ENCODE measurements at regions of chr1 and their contacts with region 1.

Region 1: DNA sequence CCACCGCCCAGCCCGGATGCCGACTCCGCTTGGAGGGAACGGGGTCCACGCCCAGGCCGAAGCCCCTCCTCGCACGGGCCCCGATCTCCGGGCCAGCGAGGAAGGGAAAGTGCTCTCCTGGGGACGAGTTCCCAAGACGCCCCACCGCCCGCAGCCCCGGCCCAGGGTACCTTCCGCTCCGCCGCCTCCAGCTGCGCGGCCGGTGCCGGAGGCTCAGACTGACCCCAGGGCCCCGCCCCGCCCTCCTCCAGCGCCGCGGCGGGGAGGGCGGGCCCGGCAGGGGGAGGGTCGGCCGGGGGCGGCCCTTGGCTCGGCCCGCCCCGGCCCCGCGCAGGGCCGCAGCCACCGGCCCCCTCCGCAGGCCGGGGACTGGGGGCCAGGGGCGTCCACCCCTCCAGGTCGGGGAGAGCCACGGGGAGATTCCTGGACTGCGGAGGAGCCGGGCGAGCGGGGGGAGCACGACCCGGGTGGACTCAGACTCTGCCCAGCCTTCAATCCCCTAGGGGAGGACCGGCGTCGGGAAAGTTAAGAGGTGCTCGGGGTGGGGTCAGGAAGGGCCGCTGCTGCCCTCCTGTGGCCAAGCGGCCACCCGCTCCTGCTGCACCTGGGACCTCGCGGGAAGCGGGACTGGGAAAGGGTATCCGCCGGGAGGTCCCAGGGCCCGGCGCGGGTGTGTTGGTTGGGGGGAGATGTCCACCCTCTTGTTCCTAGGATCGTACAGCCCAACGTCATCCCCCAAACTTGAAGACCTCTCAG is at the start of gene RHOC:
- DNase-seq: peak; percentile 57
- H3K4me3 Mint-ChIP-seq: peak within 1 kb of the TSS; percentile 81
- H3K27ac Mint-ChIP-seq: peak within 1 kb of the TSS; percentile 51
- H3K4me1 Mint-ChIP-seq: peaks cover 41% of the 10 kb centered on the region
- H3K27me3 Mint-ChIP-seq: peaks cover 18% of the 10 kb centered on the region
- total RNA-seq, gene RHOC: 68.7 and 74.7 TPM in 2 replicates

Region 2: GRCh38 chr1:112466078-112466660 is 240.9 kb before region 1 on chr1:
- intact Hi-C with region 1: loop called (anchors 2 kb)
- DNase-seq: peak; percentile 79
- H3K4me3 Mint-ChIP-seq: peak overlapping the region; percentile 77
- H3K27ac Mint-ChIP-seq: no peak overlapping the region
- H3K4me1 Mint-ChIP-seq: peaks cover 13% of the 10 kb centered on the region
- H3K27me3 Mint-ChIP-seq: peaks cover 26% of the 10 kb centered on the region

Region 3: DNA sequence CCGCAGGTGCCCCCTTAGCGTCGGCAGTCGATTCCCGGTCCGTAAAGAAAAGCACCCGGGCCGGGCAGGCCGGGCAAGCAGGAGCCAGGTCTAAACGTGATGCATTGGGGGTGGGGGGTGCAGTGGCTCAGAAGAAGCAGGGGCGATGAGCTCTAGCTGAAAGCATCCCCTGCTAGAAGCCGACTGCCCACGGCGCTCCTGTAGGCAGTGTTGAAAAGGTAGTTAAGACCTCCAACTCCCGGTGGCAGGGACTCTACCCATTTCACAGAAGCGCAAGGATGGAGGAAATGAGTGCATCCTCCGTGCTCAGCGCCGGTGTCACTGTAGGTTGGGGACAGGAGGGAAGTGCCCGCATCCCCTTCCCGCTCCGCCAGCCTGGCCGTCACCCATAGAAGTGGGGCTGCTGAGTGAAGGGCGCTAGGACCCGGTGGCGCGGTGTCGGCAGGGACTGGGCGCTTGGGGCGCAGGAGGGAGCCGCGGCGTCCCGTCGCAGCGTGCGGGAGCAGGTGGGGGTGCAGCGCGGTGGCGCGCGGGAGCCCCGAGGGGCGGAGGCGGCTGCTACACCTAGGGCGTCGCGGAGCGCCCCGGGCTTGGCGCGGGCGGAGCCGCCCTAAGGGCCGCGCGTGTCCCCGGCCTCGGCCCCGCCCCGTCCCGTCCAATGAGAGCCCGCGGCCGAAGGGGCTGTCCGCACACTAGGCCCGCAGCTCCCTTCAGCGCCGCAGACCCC is 198.6 kb before region 1 on chr1 and contains the start of gene WNT2B:
- intact Hi-C with region 1: loop called (anchors 2 kb)
- DNase-seq: peak; percentile 33
- H3K4me3 Mint-ChIP-seq: peak within 1 kb of the TSS; percentile 69
- H3K27ac Mint-ChIP-seq: no peak within 1 kb of the TSS
- H3K4me1 Mint-ChIP-seq: peaks cover 2% of the 10 kb centered on the region
- H3K27me3 Mint-ChIP-seq: peaks cover 55% of the 10 kb centered on the region
- total RNA-seq, gene WNT2B: 0.16 TPM in 1 of 2 replicates, not detected in the other

Region 4: GRCh38 chr1:112651205-112651604 is 55.9 kb before region 1 on chr1:
- intact Hi-C with region 1: loop called (anchors 1 kb)
- DNase-seq: no peak
- H3K4me3 Mint-ChIP-seq: no peak overlapping the region
- H3K27ac Mint-ChIP-seq: peak overlapping the region; percentile 35
- H3K4me1 Mint-ChIP-seq: peaks cover 19% of the 10 kb centered on the region
- H3K27me3 Mint-ChIP-seq: no peaks in the 10 kb centered on the region

Region 5: GRCh38 chr1:112735752-112736151 is 28.7 kb after region 1 on chr1:
- intact Hi-C with region 1: no loop called
- DNase-seq: no peak
- H3K4me3 Mint-ChIP-seq: no peak overlapping the region
- H3K27ac Mint-ChIP-seq: no peak overlapping the region
- H3K4me1 Mint-ChIP-seq: peaks cover 4% of the 10 kb centered on the region
- H3K27me3 Mint-ChIP-seq: peaks cover 24% of the 10 kb centered on the region

Region 6: DNA sequence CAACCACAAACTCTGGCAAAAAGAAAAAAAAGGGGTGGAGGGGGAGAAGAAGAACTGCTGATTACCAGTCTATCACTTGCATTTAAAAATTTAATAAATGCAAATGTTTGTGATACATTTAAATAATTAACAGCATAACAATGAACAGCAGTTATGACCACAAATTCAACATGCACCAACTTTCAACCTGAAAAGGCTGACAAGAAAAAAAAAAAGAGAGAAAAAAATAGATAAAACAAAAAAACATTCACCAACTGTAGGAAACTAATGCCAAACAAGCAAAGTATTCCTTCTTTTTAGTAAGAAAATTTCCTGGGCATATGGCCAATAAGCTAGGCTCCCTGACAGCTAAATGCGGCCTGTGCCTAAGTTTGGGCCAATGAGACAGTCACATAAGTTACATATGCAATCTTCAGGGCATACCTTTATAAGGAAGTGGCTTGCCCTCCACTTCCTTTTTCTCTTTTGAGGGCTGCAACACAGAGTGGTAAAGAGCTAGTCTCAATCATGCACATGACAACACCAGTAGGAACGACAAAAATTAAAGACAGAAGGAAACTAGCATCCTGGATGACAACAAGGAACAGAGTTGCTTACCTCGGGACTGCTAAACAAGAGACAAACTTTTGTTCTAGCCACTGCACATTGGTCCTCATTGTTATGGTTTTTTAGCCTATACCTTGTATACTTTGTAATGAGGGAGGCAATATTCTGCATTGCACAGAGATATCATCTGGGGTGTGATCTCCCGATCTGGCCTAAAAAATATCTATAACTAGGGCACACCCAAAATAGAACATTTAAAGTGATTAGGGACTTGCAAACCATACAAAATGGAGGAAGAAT is 1076.4 kb after region 1 on chr1:
- intact Hi-C with region 1: loop called (anchors 10 kb)
- DNase-seq: peak; percentile 45
- H3K4me3 Mint-ChIP-seq: peak overlapping the region; percentile 68
- H3K27ac Mint-ChIP-seq: peak overlapping the region; percentile 94
- H3K4me1 Mint-ChIP-seq: peaks cover 34% of the 10 kb centered on the region
- H3K27me3 Mint-ChIP-seq: no peaks in the 10 kb centered on the region

Measured in activated T-helper 2 cell treated with anti-CD3 and anti-CD28 coated beads, Interferon-gamma antibody, Interleukin-2, Interleukin-4, amounts not matched to agents 10 μg/mL and 5 μg/mL and 100 μg/mL, durations not matched to agents 14 hours and 24 hours and 36 hours (primary cell).